IMR-90 (cell line): ENCODE measurements at regions of chr5 and their contacts with region 1.

Region 1: DNA sequence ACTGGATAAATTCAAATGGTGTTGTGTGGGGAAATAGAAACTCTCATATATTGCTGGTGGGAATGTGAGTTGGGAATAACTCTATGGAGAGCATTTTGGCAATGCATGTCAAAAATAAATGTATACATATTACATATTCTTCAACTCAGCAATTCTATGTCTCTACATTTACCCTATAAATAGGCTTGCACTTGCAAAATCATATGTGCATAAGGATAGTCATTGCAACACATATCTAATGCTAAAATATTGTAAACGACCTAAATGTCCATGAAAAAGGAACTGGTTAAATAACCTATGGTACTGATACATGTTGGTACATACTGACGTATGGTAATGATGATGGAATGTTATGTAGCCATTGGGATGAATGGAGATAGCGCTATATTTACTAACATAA is 94.5 kb upstream of the CHD1 start:
- DNase-seq: no peak
- ATAC-seq: no peak
- H3K4me3 ChIP-seq: no peak overlapping the region
- H3K27ac ChIP-seq: no peak overlapping the region
- H3K4me1 ChIP-seq: peaks cover 3% of the 10 kb centered on the region
- H3K27me3 ChIP-seq: peaks cover 4% of the 10 kb centered on the region; the same call in 1 of the 2 replicates
- CTCF ChIP-seq: no peak
- POLR2A ChIP-seq: no peak
- RAD21 ChIP-seq: no peak

Region 2: GRCh38 chr5:98839469-98840383 is 183.6 kb before region 1 on chr5:
- CTCF ChIA-PET with region 1: no interaction called
- POLR2A ChIA-PET with region 1: no interaction called
- dilution Hi-C with region 1: no loop called
- in situ Hi-C with region 1: no loop called
- intact Hi-C with region 1: no loop called
- DNase-seq: no peak
- ATAC-seq: no peak
- H3K4me3 ChIP-seq: peak overlapping the region; percentile 5; the same call in 1 of the 2 replicates
- H3K27ac ChIP-seq: no peak overlapping the region
- H3K4me1 ChIP-seq: peaks cover 2% of the 10 kb centered on the region; the same call in 1 of the 2 replicates
- H3K27me3 ChIP-seq: no peaks in the 10 kb centered on the region
- CTCF ChIP-seq: peak; percentile 16; the same call in 1 of the 2 replicates
- POLR2A ChIP-seq: no peak
- RAD21 ChIP-seq: no peak

Region 3: DNA sequence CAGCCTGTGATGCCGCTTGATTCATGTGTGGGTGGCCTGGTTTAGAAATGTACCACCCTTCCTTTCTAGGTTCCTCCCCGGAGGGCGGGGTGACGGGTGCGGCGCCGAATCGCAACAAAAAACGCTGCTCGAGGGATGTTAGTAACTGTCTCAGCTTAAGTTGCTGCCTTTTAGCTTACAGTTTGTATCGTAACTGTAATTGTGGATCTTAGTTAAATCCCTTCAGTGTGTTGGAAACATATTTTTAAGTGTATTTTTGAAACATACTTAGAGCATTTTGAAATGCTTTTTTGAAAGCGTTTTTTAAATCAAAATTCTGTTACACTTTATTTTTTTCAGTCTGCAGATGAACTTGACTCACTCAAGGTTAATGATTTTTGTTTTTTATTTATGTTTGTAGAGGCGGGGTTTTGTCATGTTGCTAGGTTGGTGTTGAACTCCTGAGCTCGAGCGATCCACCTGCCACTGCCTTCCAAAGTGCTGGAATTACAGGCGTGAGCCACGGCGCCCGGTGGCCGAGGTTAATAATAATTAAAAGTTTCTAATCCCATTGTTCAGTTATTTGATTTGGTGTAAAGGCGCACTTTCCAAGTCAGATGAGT is 93.5 kb before region 1 on chr5:
- CTCF ChIA-PET with region 1: no interaction called
- POLR2A ChIA-PET with region 1: no interaction called
- dilution Hi-C with region 1: no loop called
- in situ Hi-C with region 1: no loop called
- intact Hi-C with region 1: loop called (anchors 2 kb)
- DNase-seq: no peak
- ATAC-seq: peak; percentile 52
- H3K4me3 ChIP-seq: peak overlapping the region; percentile 81
- H3K27ac ChIP-seq: peak overlapping the region; percentile 98
- H3K4me1 ChIP-seq: no peaks in the 10 kb centered on the region
- H3K27me3 ChIP-seq: no peaks in the 10 kb centered on the region
- CTCF ChIP-seq: no peak
- POLR2A ChIP-seq: no peak
- RAD21 ChIP-seq: no peak

Region 4: GRCh38 chr5:99004960-99005359 is 18.4 kb before region 1 on chr5:
- CTCF ChIA-PET with region 1: no interaction called
- POLR2A ChIA-PET with region 1: no interaction called
- dilution Hi-C with region 1: no loop called
- in situ Hi-C with region 1: no loop called
- intact Hi-C with region 1: no loop called
- DNase-seq: no peak
- ATAC-seq: no peak
- H3K4me3 ChIP-seq: no peak overlapping the region
- H3K27ac ChIP-seq: no peak overlapping the region
- H3K4me1 ChIP-seq: no peaks in the 10 kb centered on the region
- H3K27me3 ChIP-seq: no peaks in the 10 kb centered on the region
- CTCF ChIP-seq: no peak
- POLR2A ChIP-seq: no peak
- RAD21 ChIP-seq: no peak

Region 5: DNA sequence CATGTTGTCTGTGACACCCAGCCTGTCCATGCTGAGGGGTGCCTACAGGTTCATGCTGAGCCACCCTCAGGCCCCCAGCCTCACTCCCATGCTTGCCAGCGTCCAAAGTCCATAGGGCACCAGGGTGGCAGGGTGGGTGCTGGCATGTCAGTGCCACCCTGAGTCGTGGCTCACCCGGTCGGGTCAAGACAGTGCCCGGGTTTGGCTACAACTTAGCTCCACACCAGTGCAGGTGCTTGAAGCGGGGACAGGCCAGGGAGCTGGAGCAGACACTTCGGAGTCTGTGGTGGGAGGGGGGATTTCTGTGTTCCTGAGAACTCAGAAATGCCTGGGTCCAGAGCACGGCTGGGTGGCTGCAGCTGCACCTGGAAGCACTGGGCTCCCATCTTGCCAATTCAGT is 932.6 kb after region 1 on chr5:
- CTCF ChIA-PET with region 1: no interaction called
- POLR2A ChIA-PET with region 1: no interaction called
- dilution Hi-C with region 1: no loop called
- in situ Hi-C with region 1: no loop called
- intact Hi-C with region 1: no loop called
- DNase-seq: no peak
- ATAC-seq: no peak
- H3K4me3 ChIP-seq: no peak overlapping the region
- H3K27ac ChIP-seq: no peak overlapping the region
- H3K4me1 ChIP-seq: no peaks in the 10 kb centered on the region
- H3K27me3 ChIP-seq: no peaks in the 10 kb centered on the region
- CTCF ChIP-seq: no peak
- POLR2A ChIP-seq: no peak
- RAD21 ChIP-seq: no peak